AG04450 (cell line): ENCODE measurements at regions of chr19 and their contacts with region 1.

Region 1: GRCh38 chr19:28878862-28879566 is 333.9 kb downstream of the UQCRFS1 start:
- DNase-seq: peak; percentile 34
- H3K4me3 ChIP-seq: no peak overlapping the region
- H3K27ac ChIP-seq: no peak overlapping the region
- H3K27me3 ChIP-seq: no peaks in the 10 kb centered on the region
- CTCF ChIP-seq: peak; percentile 58

Region 2: DNA sequence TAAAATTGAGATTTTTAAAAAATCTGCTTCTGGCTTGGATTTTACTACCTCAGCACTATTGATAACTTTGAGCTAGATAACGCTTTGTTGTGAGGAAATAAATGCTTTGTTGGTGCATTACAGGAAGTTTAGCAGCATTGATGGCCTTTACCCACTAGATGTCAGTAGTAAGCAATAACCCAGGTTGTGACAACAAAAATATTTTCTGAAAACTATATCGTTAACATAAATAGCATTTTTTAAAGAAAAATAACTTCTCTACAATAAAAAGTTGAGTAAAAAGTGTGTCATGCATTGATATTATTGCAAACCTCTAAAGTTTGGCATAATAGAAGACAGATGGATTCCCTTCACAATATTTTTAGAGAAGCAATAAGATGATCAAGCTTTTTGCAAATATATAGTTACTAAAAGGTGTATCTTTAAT is 912.6 kb before region 1 on chr19:
- CTCF ChIA-PET with region 1: interaction called, 10 read pairs
- POLR2A ChIA-PET with region 1: no interaction called
- DNase-seq: no peak
- H3K4me3 ChIP-seq: no peak overlapping the region
- H3K27ac ChIP-seq: no peak overlapping the region
- H3K27me3 ChIP-seq: no peaks in the 10 kb centered on the region
- CTCF ChIP-seq: peak; percentile 54